ENCODE measurements at regions of chr3 and their contacts with region 1.

Region 1: GRCh38 chr3:50568947-50569749 is at the start of gene HEMK1:
- DNase-seq: peak; percentile 97
- H3K4me3 Mint-ChIP-seq: peak within 1 kb of the TSS; percentile 98
- H3K27ac Mint-ChIP-seq: peak within 1 kb of the TSS; percentile 95
- H3K4me1 Mint-ChIP-seq: peaks cover 55% of the 10 kb centered on the region
- H3K27me3 Mint-ChIP-seq: no peaks in the 10 kb centered on the region
- total RNA-seq, gene HEMK1: 27.0 to 30.4 TPM

Region 2: DNA sequence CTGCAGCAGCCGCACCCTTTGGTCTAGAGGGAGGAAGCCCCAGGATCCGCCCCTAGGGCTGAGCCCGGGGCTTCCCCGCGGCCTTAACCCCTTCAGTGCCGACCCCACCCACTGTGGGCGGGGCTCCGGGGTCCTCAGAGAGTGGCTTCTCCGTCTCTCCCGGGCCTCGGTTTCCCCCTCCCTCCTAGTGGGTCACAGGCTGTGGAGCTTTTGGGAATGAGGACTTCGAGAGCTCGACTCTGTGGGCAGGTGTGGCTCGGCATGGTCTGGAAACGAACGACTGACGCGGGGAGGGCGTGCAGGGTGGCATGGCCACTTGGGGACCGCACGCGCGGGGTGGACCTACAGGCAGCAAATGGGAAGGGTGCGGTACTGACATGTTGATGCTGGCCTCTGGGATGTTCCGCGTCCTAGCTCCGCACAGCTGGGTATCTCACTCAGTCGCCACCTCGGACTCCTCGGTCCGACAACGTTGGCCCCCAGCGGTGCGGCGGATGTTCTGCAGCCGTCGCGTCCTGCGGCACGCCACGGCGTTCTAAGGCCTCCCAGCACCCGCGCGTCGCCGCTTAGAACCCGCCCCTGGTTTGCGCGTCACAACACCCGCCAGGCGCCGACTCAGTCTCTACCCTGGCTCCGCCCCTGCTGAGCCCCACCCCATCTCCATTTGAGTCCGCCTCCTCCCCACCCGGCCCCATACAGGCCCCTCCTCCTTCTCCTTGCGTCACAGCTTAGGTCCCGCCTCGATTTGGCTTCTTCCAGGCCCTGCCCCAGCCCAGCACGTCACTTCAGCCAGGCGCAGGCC is 270.1 kb before region 1 on chr3 and contains the starts of genes HYAL3 and NAA80:
- CTCF ChIA-PET with region 1: no interaction called
- intact Hi-C with region 1: no loop called
- DNase-seq: peak; percentile 100
- H3K4me3 Mint-ChIP-seq: peak within 1 kb of the TSS; percentile 99
- H3K27ac Mint-ChIP-seq: peak within 1 kb of the TSS; percentile 97
- H3K4me1 Mint-ChIP-seq: peaks cover 25% of the 10 kb centered on the region
- H3K27me3 Mint-ChIP-seq: no peaks in the 10 kb centered on the region
- total RNA-seq, gene HYAL3: 0.74 to 0.88 TPM
- total RNA-seq, gene NAA80: 7.9 to 10.5 TPM

Region 3: GRCh38 chr3:50350527-50351322 is 218.4 kb before region 1 on chr3 and contains the starts of genes CYB561D2 and NPRL2:
- CTCF ChIA-PET with region 1: no interaction called
- intact Hi-C with region 1: loop called (anchors 2 kb)
- DNase-seq: peak; percentile 99
- H3K4me3 Mint-ChIP-seq: peak within 1 kb of the TSS; percentile 97
- H3K27ac Mint-ChIP-seq: peak within 1 kb of the TSS; percentile 97
- H3K4me1 Mint-ChIP-seq: peaks cover 59% of the 10 kb centered on the region
- H3K27me3 Mint-ChIP-seq: no peaks in the 10 kb centered on the region
- total RNA-seq, gene CYB561D2: 11.0 to 11.3 TPM
- total RNA-seq, gene NPRL2: 27.7 to 31.3 TPM

Region 4: GRCh38 chr3:50550079-50550741 is 18.9 kb before region 1 on chr3:
- CTCF ChIA-PET with region 1: interaction called, 10 read pairs
- intact Hi-C with region 1: no loop called
- DNase-seq: peak; percentile 83
- H3K4me3 Mint-ChIP-seq: no peak overlapping the region
- H3K27ac Mint-ChIP-seq: no peak overlapping the region
- H3K4me1 Mint-ChIP-seq: no peaks in the 10 kb centered on the region
- H3K27me3 Mint-ChIP-seq: no peaks in the 10 kb centered on the region

Region 5: GRCh38 chr3:50600841-50601591 is 31.9 kb after region 1 on chr3:
- CTCF ChIA-PET with region 1: interaction called, 234 read pairs
- intact Hi-C with region 1: loop called (anchors 1 kb)
- DNase-seq: peak; percentile 95
- H3K4me3 Mint-ChIP-seq: peak overlapping the region; percentile 68
- H3K27ac Mint-ChIP-seq: peak overlapping the region; percentile 100
- H3K4me1 Mint-ChIP-seq: peaks cover 74% of the 10 kb centered on the region
- H3K27me3 Mint-ChIP-seq: no peaks in the 10 kb centered on the region

Region 6: DNA sequence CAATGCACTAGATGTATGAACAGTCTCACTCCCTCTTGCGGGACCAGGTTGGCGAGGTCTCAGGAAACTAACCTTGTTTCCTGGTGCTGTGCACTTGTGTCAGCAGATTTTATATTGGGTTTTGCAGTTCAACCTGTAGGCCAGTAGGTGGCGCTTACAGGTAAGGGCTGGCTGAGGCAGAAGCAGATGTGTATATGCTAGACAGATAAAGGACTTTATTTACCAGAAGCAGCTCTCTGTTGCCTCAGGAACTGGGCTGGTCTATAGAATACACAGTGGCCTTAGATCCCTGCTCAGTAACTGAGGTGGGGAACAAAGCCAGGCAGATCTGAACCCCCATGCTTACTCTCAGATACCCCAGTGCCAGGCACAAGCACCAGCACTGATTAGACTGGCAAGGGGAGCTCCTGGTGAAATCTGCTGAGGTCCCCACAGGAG is 402.4 kb after region 1 on chr3:
- CTCF ChIA-PET with region 1: no interaction called
- intact Hi-C with region 1: loop called (anchors 5 kb)
- DNase-seq: peak; percentile 73
- H3K4me3 Mint-ChIP-seq: no peak overlapping the region
- H3K27ac Mint-ChIP-seq: no peak overlapping the region
- H3K4me1 Mint-ChIP-seq: peaks cover 16% of the 10 kb centered on the region
- H3K27me3 Mint-ChIP-seq: no peaks in the 10 kb centered on the region

Region 7: GRCh38 chr3:51384726-51385473 is 815.8 kb after region 1 on chr3 and contains the start of gene MANF:
- CTCF ChIA-PET with region 1: interaction called, 4 read pairs
- intact Hi-C with region 1: loop called (anchors 1 kb)
- DNase-seq: peak; percentile 99
- H3K4me3 Mint-ChIP-seq: peak within 1 kb of the TSS; percentile 97
- H3K27ac Mint-ChIP-seq: peak within 1 kb of the TSS; percentile 98
- H3K4me1 Mint-ChIP-seq: peaks cover 47% of the 10 kb centered on the region
- H3K27me3 Mint-ChIP-seq: no peaks in the 10 kb centered on the region
- total RNA-seq, gene MANF: 91.7 to 108 TPM

Region 8: DNA sequence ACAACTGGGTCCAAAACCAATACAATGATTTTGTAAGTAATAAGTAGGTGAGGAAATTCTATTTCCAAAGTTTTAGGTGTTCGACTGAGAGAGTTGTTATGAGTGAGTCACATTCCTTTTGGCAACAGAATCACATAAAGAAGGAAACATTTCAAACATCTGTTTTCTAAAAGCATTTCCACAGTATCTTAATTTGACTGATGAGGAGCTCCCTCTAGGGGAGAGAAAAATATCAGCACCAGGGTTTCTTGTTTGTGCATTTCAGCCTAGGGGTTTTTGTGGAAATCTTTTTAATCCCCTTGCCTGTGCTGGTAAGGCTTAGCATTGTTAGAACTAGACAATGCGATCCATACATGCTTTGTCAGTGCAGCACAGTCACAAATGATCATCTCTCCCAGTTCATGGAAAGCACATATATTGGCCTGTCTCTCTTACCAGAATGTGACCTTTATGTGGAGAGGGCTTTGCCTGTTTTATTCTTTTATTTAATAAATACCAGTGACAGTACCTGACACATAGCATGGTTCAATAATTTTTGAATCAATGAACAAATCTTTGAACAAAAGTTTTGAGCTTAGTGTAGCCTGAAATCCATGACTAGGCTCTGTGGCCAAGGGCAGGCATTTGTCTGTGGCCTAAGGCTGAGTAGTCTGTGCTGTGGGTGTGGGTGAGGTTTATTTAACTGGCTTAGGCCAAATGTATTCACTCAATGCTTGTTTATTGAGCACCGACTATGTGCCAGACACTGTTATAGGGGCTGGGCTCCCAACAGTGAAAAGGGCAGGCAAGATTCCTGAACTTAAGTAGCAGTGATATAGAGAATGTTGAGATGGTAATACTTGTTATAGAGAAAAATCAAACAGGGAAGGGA is 1231.0 kb after region 1 on chr3:
- CTCF ChIA-PET with region 1: no interaction called
- intact Hi-C with region 1: no loop called
- DNase-seq: peak; percentile 35
- H3K4me3 Mint-ChIP-seq: no peak overlapping the region
- H3K27ac Mint-ChIP-seq: no peak overlapping the region
- H3K4me1 Mint-ChIP-seq: peaks cover 22% of the 10 kb centered on the region
- H3K27me3 Mint-ChIP-seq: peaks cover 5% of the 10 kb centered on the region

Measured in activated naive CD4-positive, alpha-beta T cell treated with anti-CD3 and anti-CD28 coated beads for 36 hours (primary cell).